ENCODE measurements at regions of chr2 and their contacts with region 1.

Region 1: DNA sequence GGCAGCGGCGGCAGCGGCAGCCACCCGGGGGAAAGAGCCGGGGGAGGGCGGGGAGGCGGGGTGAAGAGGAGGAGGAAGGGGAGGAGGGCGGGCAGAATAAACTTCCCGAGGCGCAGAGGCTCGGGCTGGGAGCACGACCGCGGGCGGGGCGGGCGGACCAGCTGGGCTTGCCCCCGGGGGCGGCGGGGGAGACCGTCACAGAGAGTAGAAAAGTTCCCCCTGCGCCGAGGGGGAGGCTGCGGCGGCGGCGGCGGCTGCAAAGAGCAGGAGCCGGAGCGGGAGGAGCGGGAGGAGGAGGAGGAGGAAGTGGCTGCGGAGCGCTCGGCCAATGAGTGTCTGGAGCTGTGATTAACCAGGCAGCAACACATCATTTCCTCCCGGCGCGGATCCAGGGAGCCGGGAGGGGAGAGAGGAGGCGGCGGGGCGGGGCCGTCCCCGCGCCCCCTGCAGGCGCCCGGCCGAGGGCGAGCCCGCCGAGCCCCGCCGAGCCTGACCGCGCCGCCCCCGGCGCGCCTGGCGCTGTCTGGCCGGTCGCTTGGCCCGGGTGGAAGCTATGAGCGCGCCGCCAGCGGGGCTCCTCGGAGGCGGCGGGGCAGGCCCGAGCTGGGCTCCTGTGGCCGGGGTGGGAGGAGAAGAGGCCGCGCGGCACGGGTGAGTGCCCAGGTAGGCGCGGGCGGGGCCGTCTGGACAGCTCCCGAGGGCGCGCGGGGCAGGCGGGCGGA is at the start of gene ACVR1:
- DNase-seq: peak; percentile 95
- H3K4me3 ChIP-seq: peak within 1 kb of the TSS; percentile 75 to 98 (median 89)
- H3K27ac ChIP-seq: peak within 1 kb of the TSS; percentile 89 to 99 (median 98)
- H3K4me1 ChIP-seq: peaks cover 3 to 22% (median 21%) of the 10 kb centered on the region in 4 donors
- H3K27me3 ChIP-seq: no peaks in the 10 kb centered on the region
- CTCF ChIP-seq: peak in 3 of 5 experiments; percentile 19 to 31 (median 20)
- EP300 ChIP-seq: no peak
- POLR2A ChIP-seq: peak; percentile 78
- total RNA-seq, gene ACVR1: 4.5 to 16.5 (median 11.8) TPM

Region 2: DNA sequence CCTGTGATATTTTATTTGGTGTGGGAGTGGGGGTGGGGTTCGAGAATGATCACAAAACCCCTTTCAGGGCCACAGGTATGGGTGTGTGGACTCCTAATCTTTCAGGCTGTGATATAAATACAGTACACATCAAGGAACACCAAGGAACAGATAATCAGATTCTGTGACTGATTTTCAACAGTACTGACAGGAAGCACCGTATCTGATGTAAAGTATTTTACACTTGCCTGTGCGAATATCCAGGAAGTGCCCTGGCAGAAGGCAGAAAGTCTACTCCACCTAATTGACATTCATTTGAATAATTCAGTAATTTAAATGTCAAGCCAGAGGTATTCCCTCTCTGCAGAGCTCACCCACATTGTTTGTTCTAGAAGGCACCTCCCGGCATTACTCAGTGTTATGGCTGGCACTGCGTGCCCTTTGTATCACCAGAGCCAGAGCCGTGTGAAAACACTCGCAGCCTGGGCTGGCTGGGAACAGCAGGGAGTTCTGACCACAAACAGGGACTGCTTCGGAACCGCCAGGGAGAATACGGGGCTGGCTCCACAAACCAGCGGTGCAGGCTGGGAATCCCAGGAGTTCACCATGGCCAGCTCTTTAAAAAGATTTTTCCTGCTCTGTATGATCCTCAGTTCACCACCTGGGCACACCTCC is 91.9 kb before region 1 on chr2:
- in situ Hi-C with region 1: loop called in 1 of 4 experiments (anchors 10 kb)
- intact Hi-C with region 1: loop called (anchors 1 kb)
- DNase-seq: peak; percentile 77
- H3K4me3 ChIP-seq: peak overlapping the region in 2 of 4 donors; percentile 13 to 29
- H3K27ac ChIP-seq: peak overlapping the region; percentile 77 to 83 (median 80)
- H3K4me1 ChIP-seq: peaks cover 20 to 56% (median 35%) of the 10 kb centered on the region in 4 donors
- H3K27me3 ChIP-seq: no peaks in the 10 kb centered on the region
- CTCF ChIP-seq: no peak
- EP300 ChIP-seq: no peak
- POLR2A ChIP-seq: peak; percentile 71

Region 3: DNA sequence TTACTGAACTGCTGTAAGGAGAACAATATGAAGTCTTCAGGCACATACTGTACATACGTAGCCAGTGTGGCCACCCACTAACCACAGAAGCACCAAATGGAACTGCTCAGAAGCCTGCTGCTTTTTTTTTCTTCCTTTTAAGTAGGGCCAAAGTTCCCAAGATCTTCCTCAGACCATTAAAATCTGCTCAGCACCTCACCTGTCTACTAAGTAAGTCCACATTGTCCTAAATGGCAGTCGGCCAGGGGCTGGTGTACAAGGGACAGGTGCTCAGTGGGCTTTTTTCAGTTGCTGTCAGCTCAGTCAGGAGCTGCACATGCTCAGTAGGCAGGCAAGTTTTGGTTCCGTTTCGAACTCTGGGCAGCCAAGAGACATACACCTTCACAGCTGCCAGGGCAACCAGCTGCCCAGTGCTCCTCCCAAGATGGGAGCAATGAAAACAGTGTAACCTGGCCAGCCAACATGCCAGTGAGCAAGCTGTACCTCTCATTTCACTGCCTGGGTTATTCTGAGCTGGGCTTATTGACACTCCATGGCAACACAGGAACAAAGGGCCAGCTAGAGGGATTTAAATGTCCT is 86.2 kb before region 1 on chr2:
- in situ Hi-C with region 1: loop called in 1 of 4 experiments (anchors 10 kb)
- intact Hi-C with region 1: loop called (anchors 1 kb)
- DNase-seq: peak; percentile 70
- H3K4me3 ChIP-seq: no peak overlapping the region
- H3K27ac ChIP-seq: peak overlapping the region; percentile 33 to 66 (median 54)
- H3K4me1 ChIP-seq: peaks cover 19 to 53% (median 30%) of the 10 kb centered on the region in 4 donors
- H3K27me3 ChIP-seq: no peaks in the 10 kb centered on the region
- CTCF ChIP-seq: no peak
- EP300 ChIP-seq: no peak
- POLR2A ChIP-seq: no peak

Measured in transverse colon (tissue), 4 donors.